ENCODE measurements at regions of chr20 and their contacts with region 1.

Region 1: DNA sequence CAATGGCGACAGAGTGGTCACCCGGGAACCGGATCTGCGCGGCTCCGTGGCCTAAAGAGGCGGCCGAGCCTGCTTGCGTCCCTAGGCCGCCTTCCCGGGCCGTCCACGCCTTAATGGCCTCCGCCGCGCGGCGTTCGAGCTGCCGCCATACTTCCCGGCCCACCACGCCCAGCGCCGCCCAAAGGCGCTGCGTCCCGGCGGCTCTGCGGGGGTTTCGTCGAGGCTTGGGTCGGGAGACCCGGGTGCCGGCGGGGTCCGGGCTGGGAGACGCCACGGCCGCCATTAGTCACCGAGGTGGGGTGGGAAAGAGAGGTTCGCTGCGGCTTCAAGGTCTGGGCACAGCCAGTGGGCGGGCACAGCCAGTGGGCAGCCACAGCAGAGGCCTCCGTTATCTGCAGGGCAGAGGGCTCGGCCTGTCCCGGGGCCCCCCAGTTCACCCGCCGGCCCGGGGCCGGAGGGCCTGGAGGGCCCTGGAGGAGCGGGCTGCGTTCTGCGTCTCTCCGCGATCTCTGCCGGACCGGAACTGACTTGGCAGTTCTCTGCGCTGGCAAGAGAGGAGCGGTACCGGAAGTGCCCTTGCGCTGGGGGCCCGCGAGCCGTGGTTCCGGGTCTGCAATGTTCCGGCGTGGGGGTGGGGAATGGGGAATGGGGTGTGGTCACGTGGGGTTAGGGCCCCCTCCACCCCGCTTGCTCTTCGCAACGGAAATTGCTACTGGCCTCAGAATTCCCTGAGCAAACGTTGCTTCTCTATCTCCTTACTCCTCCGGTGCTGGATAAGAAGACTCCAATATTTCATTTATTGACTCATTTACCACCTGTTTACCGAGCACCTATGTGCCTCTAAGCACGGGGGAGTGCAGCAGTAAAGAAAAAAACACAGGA is 82.3 kb downstream of the CNBD2 start:
- DNase-seq: peak; percentile 91 to 96 (median 94)
- ATAC-seq: peak; percentile 98 to 99 (median 99)
- H3K4me3 ChIP-seq: peak overlapping the region; percentile 72 to 100 (median 96)
- H3K27ac ChIP-seq: peak overlapping the region; percentile 92 to 100 (median 98)
- H3K4me1 ChIP-seq: peaks cover 0 to 40% (median 29%) of the 10 kb centered on the region in 12 donors
- H3K27me3 ChIP-seq: no peaks in the 10 kb centered on the region
- CTCF ChIP-seq: no peak
- POLR2A ChIP-seq: peak; percentile 66 to 91

Region 2: DNA sequence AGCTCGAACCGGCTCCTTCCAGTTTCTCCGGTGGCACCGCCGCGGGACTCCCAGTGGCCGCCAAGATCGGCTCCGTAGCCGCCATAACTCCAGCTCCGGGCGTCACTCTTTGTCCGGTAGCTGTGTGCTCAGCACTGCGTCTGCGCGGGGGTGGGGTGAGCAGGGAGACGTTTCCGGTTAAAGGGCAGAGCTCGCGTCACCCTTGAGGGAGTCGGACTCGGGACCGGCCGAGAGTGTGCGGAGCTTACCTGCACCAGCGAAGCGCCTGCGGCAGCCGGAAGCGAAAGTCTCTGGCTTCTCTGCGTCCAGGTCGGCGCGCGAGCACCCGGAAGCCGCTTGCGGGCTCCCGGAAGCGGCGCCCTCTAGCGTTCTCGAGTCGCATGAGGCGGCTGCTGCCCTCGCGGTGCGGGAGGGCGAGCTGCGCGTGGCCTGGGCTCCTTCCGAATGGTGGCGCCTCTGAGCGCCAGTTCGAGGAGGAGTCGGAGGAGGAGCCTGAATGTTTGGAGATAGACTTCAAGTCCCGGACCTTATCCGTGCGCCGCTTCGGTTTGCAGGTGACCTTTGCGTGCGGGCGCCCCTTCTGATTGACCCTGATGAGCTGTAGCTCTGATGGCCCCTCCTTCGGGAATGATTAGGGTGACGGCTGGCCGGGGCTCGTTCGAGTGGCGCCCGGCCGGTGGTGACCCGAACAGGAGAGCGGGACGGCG is 96.3 kb before region 1 on chr20 and contains the start of gene SCAND1:
- intact Hi-C with region 1: loop called in 1 of 10 experiments (anchors 5 kb)
- DNase-seq: peak; percentile 94 to 96 (median 96)
- ATAC-seq: peak; percentile 93 to 94 (median 94)
- H3K4me3 ChIP-seq: peak within 1 kb of the TSS; percentile 69 to 96 (median 84)
- H3K27ac ChIP-seq: peak within 1 kb of the TSS; percentile 95 to 100 (median 97)
- H3K4me1 ChIP-seq: peaks cover 4 to 32% (median 21%) of the 10 kb centered on the region in 12 donors
- H3K27me3 ChIP-seq: no peaks in the 10 kb centered on the region
- CTCF ChIP-seq: peak; percentile 92 to 100 (median 98)
- POLR2A ChIP-seq: peak in 1 of 2 donors; percentile 82
- total RNA-seq, gene SCAND1: 30.8 to 106 (median 50.5) TPM

Region 3: DNA sequence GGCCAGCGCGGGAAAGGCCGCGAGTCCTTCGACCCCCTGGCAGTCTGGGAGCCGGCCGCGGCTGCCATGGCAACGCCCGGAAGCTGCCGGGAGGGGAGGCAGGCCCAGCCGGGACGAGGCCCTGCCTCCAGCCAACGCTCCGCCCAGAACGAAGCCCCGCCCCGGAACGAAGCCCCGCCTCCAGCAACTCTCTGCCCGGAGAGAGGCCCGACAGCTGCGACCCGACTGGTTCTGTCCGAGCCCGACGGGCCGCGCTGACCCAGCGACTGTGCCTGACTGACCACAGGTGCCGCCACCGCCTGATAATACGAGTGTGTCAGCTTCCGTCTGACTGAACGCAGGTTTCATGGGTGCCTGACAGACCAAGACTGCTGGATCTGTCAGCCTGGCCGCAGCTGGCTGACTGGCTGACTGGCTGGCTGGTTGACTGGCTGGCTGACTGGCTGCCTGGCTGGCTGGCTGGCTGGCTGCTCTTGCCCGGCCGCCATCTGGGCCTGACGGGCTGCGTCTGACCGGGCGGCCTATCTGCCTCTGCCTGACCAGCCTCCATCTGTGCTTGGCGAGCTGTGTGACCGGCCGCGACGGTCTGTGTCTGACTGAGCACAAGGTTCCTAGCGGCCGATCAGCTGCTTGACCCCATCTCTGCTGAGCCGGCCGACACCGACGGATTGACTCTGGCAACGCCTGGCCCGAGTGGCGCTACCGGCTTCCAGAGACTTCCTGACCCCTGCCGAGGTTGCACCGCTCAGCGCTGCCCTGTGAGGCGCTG is 14.2 kb after region 1 on chr20:
- intact Hi-C with region 1: loop called in 1 of 10 experiments (anchors 2 kb)
- DNase-seq: peak; percentile 94 to 99 (median 96)
- ATAC-seq: peak; percentile 96 to 99 (median 98)
- H3K4me3 ChIP-seq: peak overlapping the region; percentile 44 to 83 (median 65)
- H3K27ac ChIP-seq: peak overlapping the region; percentile 67 to 91 (median 82)
- H3K4me1 ChIP-seq: peaks cover 0 to 24% (median 11%) of the 10 kb centered on the region in 12 donors
- H3K27me3 ChIP-seq: no peaks in the 10 kb centered on the region
- CTCF ChIP-seq: peak in 2 of 12 donors; percentile 4 to 6
- POLR2A ChIP-seq: peak; percentile 37 to 89

Region 4: GRCh38 chr20:36093025-36093803 is 42.5 kb after region 1 on chr20:
- intact Hi-C with region 1: loop called in 1 of 10 experiments (anchors 5 kb)
- DNase-seq: peak; percentile 32 to 82 (median 48)
- ATAC-seq: peak in 3 of 4 donors; percentile 37 to 41 (median 39)
- H3K4me3 ChIP-seq: peak overlapping the region; percentile 56 to 88 (median 66)
- H3K27ac ChIP-seq: peak overlapping the region in 7 of 12 donors; percentile 6 to 65 (median 50)
- H3K4me1 ChIP-seq: peaks cover 0 to 37% (median 21%) of the 10 kb centered on the region in 12 donors
- H3K27me3 ChIP-seq: peaks cover 0 to 34% (median 5%) of the 10 kb centered on the region in 9 donors
- CTCF ChIP-seq: no peak
- POLR2A ChIP-seq: no peak